Heart right ventricle (tissue), 16 donors: ENCODE measurements at regions of chr2 and their contacts with region 1.

Region 1: DNA sequence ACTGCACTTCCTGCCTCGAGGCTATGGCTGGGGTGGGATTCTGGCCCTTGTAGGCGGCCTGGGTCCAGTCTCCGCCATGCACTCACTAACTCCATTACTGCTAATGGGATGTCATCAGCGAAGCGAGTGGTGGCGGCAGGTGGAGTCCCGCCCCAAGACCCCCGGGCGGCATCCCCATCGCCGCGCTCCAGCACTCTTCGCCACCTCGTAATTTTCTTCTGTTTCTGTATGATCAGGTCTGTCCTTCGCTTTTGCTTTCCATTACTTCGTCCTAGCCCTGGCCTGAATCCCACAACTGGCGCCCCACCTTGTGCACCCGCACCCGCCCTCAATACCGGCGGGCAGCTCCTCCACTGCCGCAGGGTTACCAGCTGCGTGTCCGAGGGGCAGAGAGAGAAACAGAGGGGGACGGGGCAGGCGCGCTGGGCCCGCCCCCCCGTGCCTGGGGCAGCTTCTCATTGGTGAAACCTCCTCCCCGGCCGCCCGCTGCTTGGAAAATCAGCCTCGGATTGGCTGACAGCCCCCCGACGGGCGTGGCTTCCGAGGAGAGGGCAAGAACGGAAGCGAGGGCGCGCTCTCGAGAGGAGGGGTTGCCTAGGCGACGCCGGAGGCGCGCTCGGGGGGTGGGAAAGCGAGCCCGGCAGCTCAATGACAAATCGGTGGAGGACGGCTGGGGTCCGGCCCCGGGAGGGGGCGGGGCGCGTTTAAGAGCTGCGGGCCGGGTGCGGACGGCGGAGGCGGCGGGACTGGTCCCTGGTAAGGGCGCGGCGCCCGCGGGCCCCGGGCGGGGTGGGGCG is at the start of gene RALB:
- DNase-seq: peak; percentile 100
- ATAC-seq: peak; percentile 96 to 98 (median 97)
- H3K4me3 ChIP-seq: peak within 1 kb of the TSS; percentile 59 to 95 (median 80)
- H3K27ac ChIP-seq: peak within 1 kb of the TSS; percentile 90 to 98 (median 96)
- H3K4me1 ChIP-seq: peaks cover under 1 to 62% (median 49%) of the 10 kb centered on the region in 9 donors
- H3K27me3 ChIP-seq: peaks cover 0 to 6% (median 0%) of the 10 kb centered on the region in 7 donors
- CTCF ChIP-seq: no peak
- total RNA-seq, gene RALB: 37.0 to 53.8 (median 45.0) TPM

Region 2: DNA sequence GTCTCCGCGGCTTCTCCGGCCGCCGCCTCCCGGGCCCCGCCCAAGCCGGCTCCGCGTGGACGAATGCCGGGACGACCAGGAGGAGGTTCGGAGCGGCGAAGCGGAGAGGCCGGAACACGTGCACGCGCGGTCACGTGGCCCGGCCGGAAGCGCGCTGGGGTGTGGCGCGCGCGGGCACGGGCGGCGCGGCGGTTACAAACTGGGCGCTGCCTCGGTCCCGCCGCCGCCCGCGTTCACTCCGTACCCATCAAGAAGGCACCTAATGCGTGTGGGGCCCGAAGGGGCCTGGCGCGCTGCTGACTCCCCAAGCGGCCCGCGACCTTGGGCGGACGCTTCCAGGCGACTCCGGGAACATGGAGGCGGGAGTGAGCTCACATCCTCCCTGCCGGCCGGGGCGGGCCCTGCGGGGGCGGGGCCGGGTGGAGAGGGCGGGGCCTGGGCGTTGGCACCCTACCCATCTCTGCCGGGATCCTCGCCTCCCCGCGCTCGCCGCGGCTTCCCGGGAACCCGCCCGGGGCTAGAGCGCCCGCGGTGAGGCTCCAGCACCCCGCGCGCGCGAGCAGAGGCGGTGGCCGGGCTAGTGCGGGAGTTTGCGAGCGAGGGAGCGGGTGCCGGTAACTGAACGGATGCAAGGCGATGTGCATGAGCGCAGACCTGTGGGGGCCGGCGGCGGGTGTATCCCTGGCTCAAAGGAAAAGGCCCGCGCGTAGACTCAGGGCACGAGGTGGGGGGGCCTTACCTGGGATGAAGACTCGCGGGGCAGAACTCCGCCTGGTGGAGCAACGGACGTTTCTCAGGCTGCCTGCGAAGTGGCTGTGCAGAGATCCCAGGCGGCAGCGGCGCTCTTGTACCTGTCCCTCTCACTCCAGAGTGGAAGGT is 29.1 kb before region 1 on chr2 and contains the start of gene TMEM185B:
- intact Hi-C with region 1: loop called in 2 of 10 experiments (anchors 1 to 2 kb)
- DNase-seq: peak; percentile 91 to 93
- ATAC-seq: peak; percentile 96 to 98 (median 97)
- H3K4me3 ChIP-seq: peak within 1 kb of the TSS; percentile 49 to 92 (median 72)
- H3K27ac ChIP-seq: peak within 1 kb of the TSS; percentile 82 to 99 (median 96)
- H3K4me1 ChIP-seq: peaks cover 5 to 49% (median 35%) of the 10 kb centered on the region in 9 donors
- H3K27me3 ChIP-seq: no peaks in the 10 kb centered on the region
- CTCF ChIP-seq: peak in 5 of 9 donors; percentile 9 to 51 (median 45)
- total RNA-seq, gene TMEM185B: 17.9 to 27.7 (median 23.4) TPM